Esophagus squamous epithelium (tissue), 5 donors: ENCODE measurements at regions of chr6 and their contacts with region 1.

Region 1: DNA sequence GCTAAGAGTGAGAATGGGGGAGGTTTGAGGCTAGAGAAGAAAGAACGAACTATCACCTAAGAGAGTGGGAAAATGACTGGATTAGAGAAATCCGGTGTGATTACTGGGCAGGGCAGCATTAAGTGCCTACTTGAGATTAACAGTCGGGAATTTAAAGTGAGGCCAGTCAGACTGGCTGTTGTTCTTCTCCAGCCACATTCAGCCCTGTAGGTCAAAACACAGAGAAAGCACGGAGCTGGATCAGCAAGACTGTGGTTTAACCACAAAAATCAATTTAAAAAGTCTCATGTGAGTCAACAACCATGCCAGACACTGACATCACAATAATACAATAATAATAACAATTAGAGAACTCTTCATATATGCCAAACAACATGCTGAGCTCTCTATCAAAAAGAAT is 301.9 kb upstream of the SGK1 start:
- DNase-seq: no peak
- H3K4me3 ChIP-seq: no peak overlapping the region
- H3K27ac ChIP-seq: peak overlapping the region; percentile 16 to 88 (median 72)
- H3K4me1 ChIP-seq: peaks cover 12 to 71% (median 16%) of the 10 kb centered on the region in 3 donors
- H3K27me3 ChIP-seq: no peaks in the 10 kb centered on the region
- CTCF ChIP-seq: no peak
- POLR2A ChIP-seq: no peak

Region 2: GRCh38 chr6:134502614-134503549 is 116.9 kb before region 1 on chr6:
- intact Hi-C with region 1: loop called (anchors 10 kb)
- DNase-seq: no peak
- H3K4me3 ChIP-seq: peak overlapping the region in 1 of 4 donors; percentile 17
- H3K27ac ChIP-seq: peak overlapping the region; percentile 81 to 84 (median 83)
- H3K4me1 ChIP-seq: peaks cover 4 to 49% (median 5%) of the 10 kb centered on the region in 3 donors
- H3K27me3 ChIP-seq: no peaks in the 10 kb centered on the region
- CTCF ChIP-seq: no peak
- POLR2A ChIP-seq: no peak